ENCODE measurements at regions of chr10 and their contacts with region 1.

Region 1: DNA sequence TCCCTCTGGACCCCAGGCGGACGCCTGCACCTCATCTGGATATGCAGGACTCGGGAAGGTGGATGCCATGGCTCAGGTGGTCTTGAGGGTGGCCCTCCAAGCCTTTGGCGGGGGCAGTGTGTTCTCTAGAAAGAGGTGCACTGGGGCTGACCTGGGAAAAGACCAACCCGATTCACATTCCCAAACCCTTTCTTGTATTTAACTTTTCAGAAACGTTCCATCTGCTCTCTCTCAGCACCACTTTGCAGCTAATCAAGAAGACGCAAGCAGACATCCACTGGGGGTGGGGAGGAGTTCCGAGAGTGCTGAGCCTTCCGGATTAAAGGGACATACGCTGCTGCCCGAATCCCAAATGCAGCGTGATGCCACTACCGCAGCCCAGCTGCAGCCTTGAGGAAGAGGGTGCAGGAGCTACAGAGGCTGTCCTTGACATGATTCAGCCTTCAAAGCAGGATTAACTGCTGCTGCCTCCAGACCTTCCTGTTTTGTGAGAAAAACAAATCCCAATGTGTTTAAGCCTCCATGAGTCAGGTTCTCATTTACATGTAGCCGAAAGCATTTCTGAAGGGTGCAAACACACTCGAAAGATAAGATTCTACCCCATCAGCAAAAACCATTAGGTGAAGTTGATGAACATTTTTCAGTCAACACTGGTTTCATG is 39.9 kb downstream of the RBM17 start:
- DNase-seq: no peak
- H3K4me3 Mint-ChIP-seq: peak overlapping the region; percentile 70
- H3K27ac Mint-ChIP-seq: peak overlapping the region; percentile 94
- H3K4me1 Mint-ChIP-seq: peaks cover 36% of the 10 kb centered on the region
- H3K27me3 Mint-ChIP-seq: no peaks in the 10 kb centered on the region

Region 2: DNA sequence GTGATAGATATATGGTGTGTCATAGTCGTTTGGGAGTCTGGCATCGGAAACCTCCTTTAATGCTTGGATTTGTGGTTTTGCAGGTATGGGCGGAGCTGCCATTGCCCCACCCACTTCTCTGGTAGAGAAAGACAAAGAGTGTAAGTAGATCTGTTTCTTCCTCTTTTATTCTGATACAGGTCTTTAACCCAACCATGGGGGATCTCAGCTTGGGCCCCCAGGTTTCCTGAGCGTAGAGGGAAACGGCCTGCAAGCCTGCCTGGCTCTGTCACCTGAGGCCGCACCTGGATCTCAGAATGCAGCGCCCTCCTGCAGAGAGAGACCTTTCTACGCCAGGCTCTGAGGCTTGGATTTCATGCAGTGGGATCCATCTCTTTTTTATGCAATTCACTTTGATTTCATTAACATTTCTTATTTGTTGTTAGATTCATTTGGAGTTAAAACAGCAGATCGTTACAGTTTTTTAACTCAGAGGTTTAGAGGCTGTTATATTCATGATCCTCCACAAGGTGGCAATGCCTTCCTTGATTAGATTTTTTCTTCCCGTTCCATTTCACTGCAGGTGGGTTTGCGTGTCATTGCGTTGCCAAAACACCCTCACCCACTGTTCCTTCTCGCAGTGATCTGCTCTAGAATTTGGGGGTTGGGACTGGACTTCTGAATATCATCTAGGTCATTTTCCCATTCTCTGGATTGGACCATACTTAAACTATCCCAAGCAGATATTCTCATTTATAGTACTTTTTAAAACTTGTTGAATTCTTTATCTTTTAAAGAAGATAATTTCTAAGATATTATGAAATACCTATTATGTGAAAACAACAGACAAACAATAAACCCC is 19.9 kb before region 1 on chr10:
- intact Hi-C with region 1: loop called (anchors 1 kb)
- DNase-seq: peak; percentile 82
- H3K4me3 Mint-ChIP-seq: no peak overlapping the region
- H3K27ac Mint-ChIP-seq: peak overlapping the region; percentile 71
- H3K4me1 Mint-ChIP-seq: peaks cover 35% of the 10 kb centered on the region
- H3K27me3 Mint-ChIP-seq: no peaks in the 10 kb centered on the region

Region 3: DNA sequence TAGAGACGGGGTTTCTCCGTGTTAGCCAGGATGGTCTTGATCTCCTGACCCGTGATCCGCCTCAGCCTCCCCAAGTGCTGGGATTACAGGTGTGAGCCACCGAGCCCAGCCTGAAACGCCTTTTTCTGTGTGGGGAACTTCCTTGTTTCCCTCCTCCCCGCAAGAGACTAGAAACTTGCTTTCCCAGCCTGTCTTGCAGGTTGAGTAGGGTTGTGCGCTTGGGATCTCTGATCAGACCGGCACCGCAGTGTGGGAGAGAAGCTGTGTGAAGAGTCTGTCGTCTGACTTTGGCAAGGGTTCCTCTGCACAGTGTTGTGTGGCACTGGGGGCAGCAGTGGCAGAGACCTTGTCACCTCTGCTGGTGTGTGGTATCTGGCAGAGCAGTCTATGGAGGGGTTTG is 11.0 kb before region 1 on chr10:
- intact Hi-C with region 1: loop called (anchors 2 kb)
- DNase-seq: no peak
- H3K4me3 Mint-ChIP-seq: no peak overlapping the region
- H3K27ac Mint-ChIP-seq: peak overlapping the region; percentile 30
- H3K4me1 Mint-ChIP-seq: peaks cover 17% of the 10 kb centered on the region
- H3K27me3 Mint-ChIP-seq: no peaks in the 10 kb centered on the region

Region 4: DNA sequence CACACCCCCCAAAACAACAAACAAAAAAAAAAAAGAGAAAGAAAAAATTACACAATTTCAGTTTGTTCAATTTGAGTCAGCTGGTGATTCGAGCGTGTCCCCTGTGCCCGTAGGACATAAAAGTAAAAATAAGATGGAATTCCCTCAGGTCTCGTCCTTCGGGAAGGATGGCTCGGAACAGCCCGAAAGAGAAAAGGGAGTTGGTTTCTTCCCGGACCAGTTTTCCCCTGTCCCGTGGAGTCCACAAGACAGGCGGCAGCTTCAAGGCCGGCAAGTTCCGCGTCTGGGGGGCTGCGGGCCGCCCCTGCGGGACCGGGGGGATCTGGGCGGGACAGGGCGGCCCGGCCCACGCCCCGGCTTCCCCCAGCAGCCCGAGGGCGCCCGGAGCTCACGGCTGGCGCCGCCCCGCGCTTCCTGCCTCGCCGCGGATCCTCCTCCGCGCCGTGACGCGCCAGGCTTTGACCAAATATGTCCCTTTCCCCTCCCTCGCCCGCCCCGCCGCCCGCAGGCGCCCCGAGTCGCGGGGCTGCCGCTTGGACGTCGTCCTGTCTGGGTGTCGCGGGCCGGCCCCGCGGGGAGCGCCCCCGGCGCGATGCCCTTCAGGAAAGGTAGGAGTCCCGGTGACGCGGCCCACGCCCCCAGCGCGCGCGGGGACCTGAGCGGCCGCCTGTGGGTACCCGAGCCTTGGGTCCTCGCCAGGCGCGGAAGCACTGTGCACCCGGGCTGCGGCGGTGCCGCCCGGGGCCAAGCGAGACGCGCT is 15.9 kb after region 1 on chr10:
- intact Hi-C with region 1: loop called (anchors 1 kb)
- DNase-seq: peak; percentile 98
- H3K4me3 Mint-ChIP-seq: peak overlapping the region; percentile 89
- H3K27ac Mint-ChIP-seq: peak overlapping the region; percentile 81
- H3K4me1 Mint-ChIP-seq: peaks cover 73% of the 10 kb centered on the region
- H3K27me3 Mint-ChIP-seq: no peaks in the 10 kb centered on the region

Region 5: GRCh38 chr10:6163364-6164270 is 34.9 kb after region 1 on chr10:
- intact Hi-C with region 1: loop called (anchors 1 kb)
- DNase-seq: peak; percentile 98
- H3K4me3 Mint-ChIP-seq: peak overlapping the region; percentile 98
- H3K27ac Mint-ChIP-seq: peak overlapping the region; percentile 98
- H3K4me1 Mint-ChIP-seq: peaks cover 49% of the 10 kb centered on the region
- H3K27me3 Mint-ChIP-seq: no peaks in the 10 kb centered on the region

Region 6: GRCh38 chr10:6176691-6177231 is 48.0 kb after region 1 on chr10:
- intact Hi-C with region 1: no loop called
- DNase-seq: no peak
- H3K4me3 Mint-ChIP-seq: no peak overlapping the region
- H3K27ac Mint-ChIP-seq: no peak overlapping the region
- H3K4me1 Mint-ChIP-seq: peaks cover 49% of the 10 kb centered on the region
- H3K27me3 Mint-ChIP-seq: no peaks in the 10 kb centered on the region

Region 7: GRCh38 chr10:6348096-6348874 is 219.6 kb after region 1 on chr10:
- intact Hi-C with region 1: loop called (anchors 1 kb)
- DNase-seq: peak; percentile 91
- H3K4me3 Mint-ChIP-seq: peak overlapping the region; percentile 78
- H3K27ac Mint-ChIP-seq: peak overlapping the region; percentile 92
- H3K4me1 Mint-ChIP-seq: peaks cover 46% of the 10 kb centered on the region
- H3K27me3 Mint-ChIP-seq: no peaks in the 10 kb centered on the region